Heart right ventricle (tissue), 16 donors: ENCODE measurements at regions of chr12 and their contacts with region 1.

Region 1: DNA sequence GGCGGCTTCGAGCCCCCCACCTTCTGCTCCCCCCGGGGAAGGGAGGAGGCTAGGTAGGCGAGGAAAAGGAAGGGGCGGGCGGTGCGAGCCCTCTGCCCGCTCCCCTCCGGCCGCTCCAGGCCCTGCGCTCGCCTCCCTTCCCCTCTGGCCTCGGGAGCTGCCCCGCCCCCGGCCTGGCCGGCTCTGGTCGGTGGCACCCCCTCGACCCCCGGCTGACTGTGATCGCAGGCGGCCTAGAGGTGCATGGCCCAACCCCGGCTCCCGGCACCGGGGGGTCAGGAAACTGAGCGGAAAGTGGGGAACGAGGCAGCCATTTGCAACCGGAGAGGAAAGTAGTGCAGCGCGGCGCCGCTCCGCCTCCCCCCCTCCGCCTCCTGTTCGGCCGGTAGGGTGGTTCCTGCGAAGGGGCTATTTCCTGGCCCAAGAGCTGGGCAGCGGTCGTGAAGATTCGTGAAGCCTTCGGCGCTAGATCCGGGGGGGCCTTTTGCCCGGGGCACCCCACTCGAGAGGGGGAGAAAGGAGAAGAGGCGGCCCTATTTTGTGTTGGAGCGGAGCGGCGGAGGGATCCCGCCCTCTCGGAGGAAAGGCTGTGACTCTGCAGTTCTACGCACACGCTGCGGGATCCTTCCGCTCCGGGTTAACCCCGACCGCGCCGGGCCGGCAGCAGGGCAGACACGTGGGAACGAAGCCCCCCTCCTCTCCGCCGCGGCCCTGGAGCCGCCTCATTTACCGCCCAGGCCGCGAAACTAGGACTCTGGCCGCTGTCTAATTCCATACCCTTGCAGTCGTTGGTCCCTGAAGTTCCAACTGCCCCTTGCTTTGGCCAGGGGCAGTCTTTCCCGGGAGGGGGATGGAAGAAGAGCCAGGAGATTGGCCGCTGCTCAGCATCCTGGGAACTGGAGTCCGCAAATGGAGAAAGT is at the start of gene KMT2D:
- DNase-seq: peak; percentile 92 to 93
- ATAC-seq: peak; percentile 82 to 92 (median 86)
- H3K4me3 ChIP-seq: peak within 1 kb of the TSS; percentile 74 to 99 (median 97)
- H3K27ac ChIP-seq: peak within 1 kb of the TSS; percentile 95 to 100 (median 99)
- H3K4me1 ChIP-seq: peaks cover 23 to 51% (median 42%) of the 10 kb centered on the region in 9 donors
- H3K27me3 ChIP-seq: no peaks in the 10 kb centered on the region
- CTCF ChIP-seq: peak in 6 of 9 donors; percentile 31 to 46 (median 36)
- total RNA-seq, gene KMT2D: 32.6 to 65.3 (median 54.2) TPM

Region 2: GRCh38 chr12:49018261-49019119 is 42.0 kb before region 1 on chr12 and contains the start of gene PRKAG1:
- intact Hi-C with region 1: loop called in 4 of 10 experiments (anchors 1 to 5 kb)
- DNase-seq: peak; percentile 96
- ATAC-seq: peak; percentile 93 to 97 (median 96)
- H3K4me3 ChIP-seq: peak within 1 kb of the TSS; percentile 56 to 92 (median 81)
- H3K27ac ChIP-seq: peak within 1 kb of the TSS; percentile 78 to 99 (median 96)
- H3K4me1 ChIP-seq: peaks cover 0 to 54% (median 37%) of the 10 kb centered on the region in 9 donors
- H3K27me3 ChIP-seq: no peaks in the 10 kb centered on the region
- CTCF ChIP-seq: peak in 8 of 9 donors; percentile 22 to 69 (median 55)
- total RNA-seq, gene PRKAG1: 79.4 to 110 (median 100) TPM

Region 3: GRCh38 chr12:49121047-49121696 is 60.7 kb after region 1 on chr12:
- intact Hi-C with region 1: loop called in 7 of 10 experiments (anchors 2 to 10 kb)
- DNase-seq: peak in 1 of 2 donors; percentile 48
- ATAC-seq: peak in 7 of 8 donors; percentile 50 to 89 (median 76)
- H3K4me3 ChIP-seq: no peak overlapping the region
- H3K27ac ChIP-seq: no peak overlapping the region
- H3K4me1 ChIP-seq: peaks cover 0 to 3% (median 0%) of the 10 kb centered on the region in 9 donors
- H3K27me3 ChIP-seq: no peaks in the 10 kb centered on the region
- CTCF ChIP-seq: peak; percentile 33 to 74 (median 64)

Region 4: GRCh38 chr12:49188914-49189367 is 128.4 kb after region 1 on chr12 and contains the start of gene TUBA1A:
- intact Hi-C with region 1: loop called in 3 of 10 experiments (anchors 1 to 10 kb)
- DNase-seq: peak; percentile 86 to 96
- ATAC-seq: peak; percentile 91 to 95 (median 93)
- H3K4me3 ChIP-seq: peak within 1 kb of the TSS; percentile 60 to 98 (median 87)
- H3K27ac ChIP-seq: peak within 1 kb of the TSS; percentile 90 to 100 (median 99)
- H3K4me1 ChIP-seq: peaks cover 5 to 33% (median 30%) of the 10 kb centered on the region in 9 donors
- H3K27me3 ChIP-seq: no peaks in the 10 kb centered on the region
- CTCF ChIP-seq: peak in 1 of 9 donors; percentile 16
- total RNA-seq, gene TUBA1A: 93.9 to 258 (median 134) TPM

Region 5: GRCh38 chr12:49567611-49568441 is 507.3 kb after region 1 on chr12 and contains the start of gene MCRS1:
- intact Hi-C with region 1: loop called in 1 of 10 experiments (anchors 5 kb)
- DNase-seq: peak; percentile 86 to 90
- ATAC-seq: peak; percentile 68 to 93 (median 90)
- H3K4me3 ChIP-seq: peak within 1 kb of the TSS; percentile 61 to 97 (median 86)
- H3K27ac ChIP-seq: peak within 1 kb of the TSS; percentile 65 to 98 (median 94)
- H3K4me1 ChIP-seq: peaks cover 15 to 67% (median 46%) of the 10 kb centered on the region in 9 donors
- H3K27me3 ChIP-seq: no peaks in the 10 kb centered on the region
- CTCF ChIP-seq: no peak
- total RNA-seq, gene MCRS1: 72.6 to 118 (median 82.2) TPM